ENCODE measurements at regions of chr5 and their contacts with region 1.

Region 1: DNA sequence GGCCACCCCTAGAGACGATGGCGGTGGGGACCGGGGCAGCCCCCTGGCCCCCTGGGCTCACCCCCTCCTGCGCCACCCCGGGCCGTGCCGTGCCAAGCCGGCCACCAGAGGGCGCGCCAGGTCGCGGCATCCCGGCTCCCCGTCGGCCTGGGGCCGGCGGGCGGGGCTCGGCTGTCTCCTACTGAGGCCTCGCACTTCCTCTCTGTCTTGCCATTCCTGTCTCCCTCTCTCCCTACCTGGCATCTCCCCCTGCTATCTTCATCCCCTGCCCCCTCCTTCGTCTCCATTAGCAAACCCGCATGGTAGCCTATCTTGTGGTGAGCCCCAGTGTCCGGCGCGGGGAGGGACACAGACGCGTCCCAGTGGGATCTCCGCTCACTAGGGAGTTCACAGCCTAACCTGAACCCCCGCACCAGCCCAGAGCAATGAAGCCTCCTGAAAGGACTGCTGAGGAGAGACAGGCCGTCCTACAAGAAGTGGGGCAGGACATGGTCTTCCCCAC is 29.8 kb upstream of the FABP6 start:
- H3K4me3 ChIP-seq: no peak overlapping the region
- H3K27ac ChIP-seq: no peak overlapping the region
- H3K4me1 ChIP-seq: no peaks in the 10 kb centered on the region
- CTCF ChIP-seq: peak; percentile 35; the same call in 1 of the 2 replicates

Region 2: GRCh38 chr5:160082614-160083500 is 116.6 kb before region 1 on chr5:
- CTCF ChIA-PET with region 1: interaction called, 14 read pairs
- POLR2A ChIA-PET with region 1: no interaction called
- H3K4me3 ChIP-seq: no peak overlapping the region
- H3K27ac ChIP-seq: no peak overlapping the region
- H3K4me1 ChIP-seq: peaks cover 4% of the 10 kb centered on the region
- CTCF ChIP-seq: no peak

Region 3: GRCh38 chr5:160188142-160189015 is 11.1 kb before region 1 on chr5:
- CTCF ChIA-PET with region 1: interaction called, 15 read pairs
- POLR2A ChIA-PET with region 1: interaction called, 5 read pairs
- H3K4me3 ChIP-seq: no peak overlapping the region
- H3K27ac ChIP-seq: no peak overlapping the region
- H3K4me1 ChIP-seq: no peaks in the 10 kb centered on the region
- CTCF ChIP-seq: no peak

Region 4: DNA sequence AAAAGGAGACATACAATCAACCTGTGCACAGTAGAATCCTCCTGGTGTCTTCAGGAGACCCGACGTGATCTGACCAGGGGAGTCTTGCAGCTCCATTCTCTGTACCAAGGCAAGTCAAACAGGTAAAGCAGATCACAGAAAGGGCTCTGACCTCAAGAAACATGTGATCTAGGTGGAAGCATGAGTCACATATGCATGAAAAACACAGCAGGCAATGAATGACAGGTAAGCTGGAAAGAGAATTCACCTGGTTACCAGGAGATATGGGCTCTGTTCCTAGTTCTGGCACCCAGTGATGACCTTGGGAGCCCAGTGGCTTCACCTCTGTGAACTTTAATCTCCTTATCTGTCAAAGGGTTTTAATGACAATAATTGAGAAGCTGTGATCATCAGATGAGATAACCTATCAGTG is 10.5 kb after region 1 on chr5:
- CTCF ChIA-PET with region 1: interaction called, 10 read pairs
- POLR2A ChIA-PET with region 1: no interaction called
- H3K4me3 ChIP-seq: no peak overlapping the region
- H3K27ac ChIP-seq: no peak overlapping the region
- H3K4me1 ChIP-seq: no peaks in the 10 kb centered on the region
- CTCF ChIP-seq: no peak

Region 5: GRCh38 chr5:160342403-160342941 is 143.0 kb after region 1 on chr5:
- CTCF ChIA-PET with region 1: interaction called, 47 read pairs
- POLR2A ChIA-PET with region 1: no interaction called
- H3K4me3 ChIP-seq: no peak overlapping the region
- H3K27ac ChIP-seq: no peak overlapping the region
- H3K4me1 ChIP-seq: no peaks in the 10 kb centered on the region
- CTCF ChIP-seq: no peak

Region 6: GRCh38 chr5:160508780-160509361 is 309.4 kb after region 1 on chr5:
- CTCF ChIA-PET with region 1: no interaction called
- POLR2A ChIA-PET with region 1: no interaction called
- H3K4me3 ChIP-seq: no peak overlapping the region
- H3K27ac ChIP-seq: no peak overlapping the region
- H3K4me1 ChIP-seq: no peaks in the 10 kb centered on the region
- CTCF ChIP-seq: peak; percentile 81

Region 7: GRCh38 chr5:160802592-160802991 is 603.1 kb after region 1 on chr5:
- CTCF ChIA-PET with region 1: no interaction called
- POLR2A ChIA-PET with region 1: no interaction called
- H3K4me3 ChIP-seq: no peak overlapping the region
- H3K27ac ChIP-seq: no peak overlapping the region
- H3K4me1 ChIP-seq: no peaks in the 10 kb centered on the region
- CTCF ChIP-seq: no peak

Measured in HEK293 (cell line).